Pancreas (tissue), 10 donors: ENCODE measurements at regions of chr3 and their contacts with region 1.

Region 1: GRCh38 chr3:138547342-138547975 is 46.6 kb downstream of the CEP70 start:
- DNase-seq: no peak
- ATAC-seq: no peak
- H3K4me3 ChIP-seq: no peak overlapping the region
- H3K27ac ChIP-seq: no peak overlapping the region
- H3K4me1 ChIP-seq: no peaks in the 10 kb centered on the region
- H3K27me3 ChIP-seq: no peaks in the 10 kb centered on the region
- CTCF ChIP-seq: no peak

Region 2: DNA sequence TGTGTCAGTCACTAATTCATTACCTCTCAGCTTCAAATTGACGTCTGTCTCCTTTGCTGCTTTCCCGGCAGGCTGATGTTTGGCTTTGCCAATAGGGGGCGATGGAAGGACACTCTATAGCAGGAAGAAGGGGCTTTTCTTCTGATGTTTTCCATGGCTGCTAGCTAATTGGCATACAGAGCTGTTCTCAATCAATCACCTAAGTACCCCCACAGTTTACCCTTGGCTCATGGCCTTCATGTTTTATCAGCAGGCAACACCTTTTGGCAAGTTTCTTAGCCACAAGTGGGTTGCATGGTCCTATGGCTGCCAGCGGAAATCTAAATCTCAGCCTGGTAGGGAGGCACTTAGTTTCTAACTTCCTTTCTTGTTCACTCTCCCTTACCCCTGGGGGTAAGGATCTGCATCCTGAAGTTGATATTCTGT is 68.0 kb before region 1 on chr3:
- intact Hi-C with region 1: loop called in 1 of 3 experiments (anchors 10 kb)
- DNase-seq: peak in 1 of 6 donors; percentile 45
- ATAC-seq: peak in 3 of 4 donors; percentile 51 to 83 (median 69)
- H3K4me3 ChIP-seq: no peak overlapping the region
- H3K27ac ChIP-seq: no peak overlapping the region
- H3K4me1 ChIP-seq: no peaks in the 10 kb centered on the region
- H3K27me3 ChIP-seq: no peaks in the 10 kb centered on the region
- CTCF ChIP-seq: peak in 3 of 4 donors; percentile 45 to 56 (median 56)